MCF 10A (cell line): ENCODE measurements at regions of chr3 and their contacts with region 1.

Region 1: GRCh38 chr3:115217678-115218451 is 70.8 kb upstream of the ZBTB20 start:
- DNase-seq: peak; percentile 71
- H3K4me3 Mint-ChIP-seq: no peak overlapping the region
- H3K27ac Mint-ChIP-seq: peak overlapping the region; percentile 9
- H3K4me1 Mint-ChIP-seq: peaks cover 8% of the 10 kb centered on the region
- H3K27me3 Mint-ChIP-seq: no peaks in the 10 kb centered on the region
- CTCF ChIP-seq: peak; percentile 81

Region 2: GRCh38 chr3:115239717-115240116 is 21.9 kb after region 1 on chr3:
- CTCF ChIA-PET with region 1: interaction called, 17 read pairs
- POLR2A ChIA-PET with region 1: interaction called, 5 read pairs
- intact Hi-C with region 1: no loop called
- DNase-seq: peak; percentile 89
- H3K4me3 Mint-ChIP-seq: no peak overlapping the region
- H3K27ac Mint-ChIP-seq: no peak overlapping the region
- H3K4me1 Mint-ChIP-seq: peaks cover 11% of the 10 kb centered on the region
- H3K27me3 Mint-ChIP-seq: no peaks in the 10 kb centered on the region
- CTCF ChIP-seq: no peak

Region 3: DNA sequence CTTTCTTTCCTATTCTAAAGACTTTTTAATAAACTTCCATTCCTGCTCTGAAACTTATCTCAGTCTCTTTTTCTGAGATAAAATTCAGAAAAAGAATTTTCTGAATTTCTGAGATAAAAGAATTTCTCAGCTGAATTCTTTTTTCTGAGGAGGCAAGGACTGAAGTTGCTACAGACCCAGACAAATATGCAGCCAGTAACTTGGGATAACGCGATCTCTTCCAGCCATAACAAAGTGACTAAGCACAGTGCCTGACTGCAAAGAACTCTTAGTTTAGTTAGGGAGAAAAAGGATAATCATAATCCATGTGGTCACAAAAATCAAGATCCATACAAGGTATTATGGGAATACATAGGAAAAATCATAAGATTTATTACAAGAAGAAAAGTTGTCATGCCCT is 183.4 kb after region 1 on chr3:
- CTCF ChIA-PET with region 1: no interaction called
- POLR2A ChIA-PET with region 1: no interaction called
- intact Hi-C with region 1: no loop called
- DNase-seq: peak; percentile 40
- H3K4me3 Mint-ChIP-seq: no peak overlapping the region
- H3K27ac Mint-ChIP-seq: no peak overlapping the region
- H3K4me1 Mint-ChIP-seq: peaks cover 6% of the 10 kb centered on the region
- H3K27me3 Mint-ChIP-seq: no peaks in the 10 kb centered on the region
- CTCF ChIP-seq: no peak

Region 4: GRCh38 chr3:115783938-115784738 is 566.3 kb after region 1 on chr3:
- CTCF ChIA-PET with region 1: interaction called, 33 read pairs
- POLR2A ChIA-PET with region 1: no interaction called
- intact Hi-C with region 1: loop called (anchors 1 kb)
- DNase-seq: peak; percentile 86
- H3K4me3 Mint-ChIP-seq: peak overlapping the region; percentile 81
- H3K27ac Mint-ChIP-seq: peak overlapping the region; percentile 90
- H3K4me1 Mint-ChIP-seq: peaks cover 25% of the 10 kb centered on the region
- H3K27me3 Mint-ChIP-seq: no peaks in the 10 kb centered on the region
- CTCF ChIP-seq: peak; percentile 94